PC-3 (cell line): ENCODE measurements at regions of chr1 and their contacts with region 1.

Region 1: DNA sequence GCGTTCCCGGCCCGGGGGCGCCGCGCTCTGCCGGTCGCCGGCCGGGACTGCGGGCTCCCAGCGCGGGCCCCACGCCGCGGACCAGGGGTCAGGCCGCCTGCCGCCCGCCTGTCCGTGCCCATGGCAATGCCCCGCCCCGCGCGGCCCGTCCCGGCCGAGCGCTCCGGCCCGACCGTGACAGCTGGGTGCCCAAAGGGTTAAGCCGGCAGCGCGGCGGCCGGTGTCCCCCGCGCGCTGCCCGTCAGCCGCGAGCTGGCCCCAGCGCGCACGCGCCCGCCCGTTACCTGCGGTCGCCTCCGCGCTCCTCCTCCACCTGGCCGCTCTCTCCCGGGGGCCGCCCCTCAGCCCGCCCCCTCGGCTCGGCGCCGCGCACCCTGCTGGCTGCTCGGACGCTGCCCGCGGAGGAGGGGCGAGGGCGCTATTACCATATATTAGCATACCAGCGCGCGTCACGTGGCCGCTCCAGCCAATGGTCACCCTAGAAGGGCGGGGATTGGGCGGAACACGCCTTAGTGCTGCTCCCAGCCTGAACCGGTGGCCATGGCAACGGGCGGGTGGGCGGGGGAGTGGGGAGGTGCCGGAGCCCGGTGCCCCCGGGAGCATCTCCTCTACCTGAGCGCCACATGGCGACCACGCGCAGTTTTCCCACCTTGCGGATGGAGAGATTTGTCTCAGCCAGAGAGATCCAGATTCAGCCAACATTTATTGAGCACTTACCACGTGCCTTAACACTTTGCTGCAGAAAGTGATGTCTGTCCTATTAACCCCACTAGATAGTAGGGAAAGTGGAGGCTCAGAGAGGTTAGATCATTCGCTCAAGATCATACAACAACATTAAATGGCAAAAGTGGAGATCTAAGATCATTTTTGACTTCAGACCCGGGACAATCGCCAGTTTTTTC is at the start of gene PHC2:
- DNase-seq: peak; percentile 98
- ATAC-seq: peak; percentile 65
- H3K4me3 ChIP-seq: peak within 1 kb of the TSS; percentile 91
- H3K27ac ChIP-seq: peak within 1 kb of the TSS; percentile 97
- H3K4me1 ChIP-seq: peaks cover 71% of the 10 kb centered on the region
- H3K27me3 ChIP-seq: no peaks in the 10 kb centered on the region
- CTCF ChIP-seq: peak; percentile 23; the same call in 1 of the 2 replicates
- total RNA-seq, gene PHC2: 125 and 134 TPM in 2 replicates

Region 2: DNA sequence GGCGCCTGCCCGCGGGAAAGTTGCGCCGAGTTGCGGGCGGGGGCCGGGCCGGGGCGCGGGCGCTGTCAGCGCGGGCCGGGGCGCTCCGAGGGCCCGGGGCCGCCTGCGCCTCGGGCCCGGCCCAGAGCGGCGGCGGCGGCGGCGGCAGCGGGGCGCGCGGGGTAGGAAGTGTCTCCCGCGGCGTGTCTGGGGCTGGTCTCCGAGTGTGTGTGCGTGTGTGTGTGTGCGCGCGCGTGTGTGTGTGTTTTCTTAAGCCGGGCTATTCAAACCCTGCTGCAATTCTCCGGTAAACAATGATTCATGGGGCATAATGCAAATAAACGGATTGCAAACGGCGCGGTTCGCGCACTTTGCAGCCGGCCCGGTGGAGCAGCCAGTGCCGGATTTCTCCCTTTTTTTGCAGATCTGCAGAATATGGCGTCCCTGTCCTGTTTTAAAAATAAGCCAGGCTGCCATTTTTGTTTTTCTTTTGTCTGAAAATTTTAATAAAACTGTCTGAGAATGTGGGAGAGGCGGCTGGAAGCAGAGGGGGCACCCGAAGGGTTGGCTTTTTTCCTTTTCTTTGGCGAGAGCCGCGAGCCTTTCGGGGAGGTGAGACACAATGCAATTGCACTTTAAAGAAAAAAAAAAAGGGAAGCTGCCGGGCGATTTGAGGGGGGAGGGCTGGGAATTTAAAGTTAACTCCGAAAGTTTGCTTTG is 174.1 kb before region 1 on chr1:
- CTCF ChIA-PET with region 1: no interaction called
- POLR2A ChIA-PET with region 1: no interaction called
- intact Hi-C with region 1: loop called (anchors 5 kb)
- DNase-seq: peak; percentile 87
- ATAC-seq: peak; percentile 55
- H3K4me3 ChIP-seq: peak overlapping the region; percentile 89
- H3K27ac ChIP-seq: peak overlapping the region; percentile 88
- H3K4me1 ChIP-seq: peaks cover 13% of the 10 kb centered on the region; the same call in 1 of the 2 replicates
- H3K27me3 ChIP-seq: no peaks in the 10 kb centered on the region
- CTCF ChIP-seq: no peak

Region 3: GRCh38 chr1:33349778-33350610 is 80.9 kb before region 1 on chr1:
- CTCF ChIA-PET with region 1: no interaction called
- POLR2A ChIA-PET with region 1: no interaction called
- intact Hi-C with region 1: loop called (anchors 1 kb)
- DNase-seq: peak; percentile 87
- ATAC-seq: peak; percentile 61
- H3K4me3 ChIP-seq: peak overlapping the region; percentile 73
- H3K27ac ChIP-seq: peak overlapping the region; percentile 80
- H3K4me1 ChIP-seq: peaks cover 50% of the 10 kb centered on the region
- H3K27me3 ChIP-seq: no peaks in the 10 kb centered on the region
- CTCF ChIP-seq: no peak

Region 4: GRCh38 chr1:33455539-33456501 is 24.9 kb after region 1 on chr1:
- CTCF ChIA-PET with region 1: interaction called, 12 read pairs
- POLR2A ChIA-PET with region 1: interaction called, 5 read pairs
- intact Hi-C with region 1: loop called (anchors 1 kb)
- DNase-seq: peak; percentile 83
- ATAC-seq: peak; percentile 89
- H3K4me3 ChIP-seq: no peak overlapping the region
- H3K27ac ChIP-seq: peak overlapping the region; percentile 6; the same call in 1 of the 2 replicates
- H3K4me1 ChIP-seq: peaks cover 34% of the 10 kb centered on the region
- H3K27me3 ChIP-seq: no peaks in the 10 kb centered on the region
- CTCF ChIP-seq: peak; percentile 89

Region 5: GRCh38 chr1:33472349-33472980 is 41.5 kb after region 1 on chr1 and contains the start of gene ZSCAN20:
- CTCF ChIA-PET with region 1: interaction called, 3 read pairs
- POLR2A ChIA-PET with region 1: interaction called, 3 read pairs
- intact Hi-C with region 1: loop called (anchors 5 kb)
- DNase-seq: peak; percentile 80
- ATAC-seq: peak; percentile 70
- H3K4me3 ChIP-seq: peak within 1 kb of the TSS; percentile 67
- H3K27ac ChIP-seq: no peak within 1 kb of the TSS
- H3K4me1 ChIP-seq: no peaks in the 10 kb centered on the region
- H3K27me3 ChIP-seq: peaks cover 7% of the 10 kb centered on the region; the same call in 1 of the 2 replicates
- CTCF ChIP-seq: no peak
- total RNA-seq, gene ZSCAN20: 0.84 and 1.6 TPM in 2 replicates

Region 6: GRCh38 chr1:33575324-33575879 is 144.5 kb after region 1 on chr1:
- CTCF ChIA-PET with region 1: no interaction called
- POLR2A ChIA-PET with region 1: no interaction called
- intact Hi-C with region 1: no loop called
- DNase-seq: no peak
- ATAC-seq: no peak
- H3K4me3 ChIP-seq: no peak overlapping the region
- H3K27ac ChIP-seq: no peak overlapping the region
- H3K4me1 ChIP-seq: no peaks in the 10 kb centered on the region
- H3K27me3 ChIP-seq: peaks cover 82% of the 10 kb centered on the region
- CTCF ChIP-seq: no peak

Region 7: DNA sequence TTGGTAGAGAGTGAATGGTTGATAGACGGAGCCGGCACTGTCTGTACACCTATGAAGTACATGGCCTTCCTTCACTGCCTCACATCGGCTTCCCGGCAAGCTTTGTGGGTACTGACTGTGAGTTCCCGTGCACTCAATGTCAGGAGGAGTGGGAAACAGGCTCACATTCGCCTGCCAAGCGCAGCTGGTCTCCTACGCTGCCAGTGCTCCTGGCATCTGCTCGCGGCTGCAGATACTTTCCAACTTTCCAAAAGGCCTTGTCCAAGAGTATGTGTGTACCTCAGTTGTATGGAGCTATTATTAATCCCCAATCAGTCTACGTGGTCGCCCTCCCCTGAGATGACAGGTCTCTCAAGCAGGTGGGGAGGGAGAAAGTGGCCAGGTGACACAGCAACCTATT is 222.3 kb after region 1 on chr1:
- CTCF ChIA-PET with region 1: no interaction called
- POLR2A ChIA-PET with region 1: no interaction called
- intact Hi-C with region 1: no loop called
- DNase-seq: no peak
- ATAC-seq: no peak
- H3K4me3 ChIP-seq: no peak overlapping the region
- H3K27ac ChIP-seq: no peak overlapping the region
- H3K4me1 ChIP-seq: no peaks in the 10 kb centered on the region
- H3K27me3 ChIP-seq: peaks cover 48% of the 10 kb centered on the region
- CTCF ChIP-seq: no peak